Activated naive CD4-positive, alpha-beta T cell treated with anti-CD3 and anti-CD28 coated beads, Interleukin-2, amount 10 ng/mL, durations not matched to agents 7 days and 5 days (primary cell): ENCODE measurements at regions of chr15 and their contacts with region 1.

Region 1: DNA sequence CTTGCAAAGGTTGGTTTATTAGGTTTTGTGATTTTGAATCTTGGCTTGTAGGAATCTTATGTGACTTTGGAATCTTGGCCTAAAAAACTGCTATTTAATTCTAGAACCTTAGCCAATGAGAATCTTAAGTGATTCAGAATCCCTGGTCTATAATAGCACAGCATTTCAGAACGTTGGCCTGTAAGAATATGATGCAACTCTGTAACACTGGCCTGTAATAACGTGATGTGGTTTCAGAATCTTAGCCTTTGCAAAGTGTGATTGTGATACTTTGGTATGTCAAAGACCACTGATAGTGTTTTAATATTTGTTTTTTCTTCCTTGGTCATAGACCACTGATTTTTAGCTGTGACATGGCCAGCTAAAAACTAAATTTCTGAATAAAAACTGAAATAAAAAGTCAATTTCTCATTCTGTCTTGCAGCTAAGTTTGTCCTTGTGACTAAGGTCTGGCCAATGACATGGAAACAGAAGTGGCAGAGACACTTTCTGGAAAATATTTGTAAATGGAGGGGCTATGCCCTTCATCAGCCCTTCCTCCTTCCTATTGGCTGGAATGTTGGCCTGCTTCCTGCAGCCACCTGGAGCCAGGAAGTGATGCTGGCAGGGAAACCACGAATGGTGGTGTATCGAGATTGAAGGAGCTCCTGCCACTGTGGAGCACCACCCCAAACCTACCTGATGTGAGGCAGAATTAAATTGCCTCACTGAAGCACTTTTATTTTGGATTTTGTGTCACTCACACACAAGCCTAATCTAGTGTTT is 42.3 kb upstream of the CORO2B start:
- DNase-seq: no peak
- H3K4me3 Mint-ChIP-seq: no peak overlapping the region
- H3K27ac Mint-ChIP-seq: no peak overlapping the region
- H3K4me1 Mint-ChIP-seq: no peaks in the 10 kb centered on the region
- H3K27me3 Mint-ChIP-seq: peaks cover 25% of the 10 kb centered on the region

Region 2: DNA sequence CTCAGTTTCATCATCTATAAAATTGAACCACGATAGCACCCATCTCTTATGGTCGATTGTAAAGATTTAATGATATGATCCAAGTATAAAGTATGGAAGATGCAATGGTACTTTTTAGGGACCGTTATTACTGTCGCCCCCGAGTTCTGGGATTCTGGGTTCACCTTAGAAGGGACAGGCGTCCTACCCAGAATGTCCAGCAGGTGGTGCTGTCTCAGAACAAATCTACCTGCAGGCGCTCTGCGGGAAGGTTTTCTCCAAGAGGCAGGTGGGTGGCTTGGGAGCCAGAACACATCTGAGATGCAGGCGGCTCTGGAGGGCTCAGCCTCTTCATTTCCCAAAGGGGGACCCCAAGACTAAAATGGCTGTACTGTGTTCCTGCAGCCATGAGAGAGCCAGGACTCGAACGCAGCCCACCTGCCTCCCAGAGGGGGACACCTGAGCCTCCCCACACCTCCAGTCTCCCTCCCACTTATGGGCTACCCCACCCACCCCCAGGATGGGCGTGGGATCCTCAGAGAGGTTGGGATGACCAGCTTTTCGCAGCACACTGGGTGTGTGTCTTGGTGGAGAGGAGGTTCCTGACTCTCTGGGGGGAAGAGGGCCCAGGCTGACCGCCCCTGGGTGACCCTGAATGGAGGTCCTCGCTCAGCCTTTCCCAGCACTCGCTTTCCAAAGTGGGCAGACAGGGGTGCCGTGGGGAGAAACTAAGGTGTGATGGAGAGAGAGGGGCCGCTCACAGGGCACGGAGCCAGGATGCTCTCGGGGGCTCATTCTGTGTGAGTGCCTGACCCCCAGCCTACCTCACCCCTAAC is 14.2 kb after region 1 on chr15:
- CTCF ChIA-PET with region 1: interaction called, 24 read pairs
- DNase-seq: peak; percentile 86
- H3K4me3 Mint-ChIP-seq: no peak overlapping the region
- H3K27ac Mint-ChIP-seq: peak overlapping the region; percentile 16
- H3K4me1 Mint-ChIP-seq: no peaks in the 10 kb centered on the region
- H3K27me3 Mint-ChIP-seq: peaks cover 31% of the 10 kb centered on the region